SK-N-SH (cell line): ENCODE measurements at regions of chr9 and their contacts with region 1.

Region 1: GRCh38 chr9:114155263-114155972 is at the start of gene COL27A1:
- DNase-seq: peak; percentile 97
- H3K4me3 ChIP-seq: peak within 1 kb of the TSS; percentile 54 to 88
- H3K27ac ChIP-seq: peak within 1 kb of the TSS in 1 of 2 experiments; percentile 29; a peak in 1 of 4 replicates
- H3K4me1 ChIP-seq: peaks cover 5 to 8% of the 10 kb centered on the region in 2 experiments; a peak in 2 of 4 replicates
- H3K27me3 ChIP-seq: peaks cover 5% of the 10 kb centered on the region; the same call in 1 of the 2 replicates
- CTCF ChIP-seq: peak; percentile 93
- EP300 ChIP-seq: no peak
- RAD21 ChIP-seq: peak; percentile 82
- polyA plus RNA-seq, gene COL27A1: 6.8 and 8.7 TPM in 2 replicates

Region 2: DNA sequence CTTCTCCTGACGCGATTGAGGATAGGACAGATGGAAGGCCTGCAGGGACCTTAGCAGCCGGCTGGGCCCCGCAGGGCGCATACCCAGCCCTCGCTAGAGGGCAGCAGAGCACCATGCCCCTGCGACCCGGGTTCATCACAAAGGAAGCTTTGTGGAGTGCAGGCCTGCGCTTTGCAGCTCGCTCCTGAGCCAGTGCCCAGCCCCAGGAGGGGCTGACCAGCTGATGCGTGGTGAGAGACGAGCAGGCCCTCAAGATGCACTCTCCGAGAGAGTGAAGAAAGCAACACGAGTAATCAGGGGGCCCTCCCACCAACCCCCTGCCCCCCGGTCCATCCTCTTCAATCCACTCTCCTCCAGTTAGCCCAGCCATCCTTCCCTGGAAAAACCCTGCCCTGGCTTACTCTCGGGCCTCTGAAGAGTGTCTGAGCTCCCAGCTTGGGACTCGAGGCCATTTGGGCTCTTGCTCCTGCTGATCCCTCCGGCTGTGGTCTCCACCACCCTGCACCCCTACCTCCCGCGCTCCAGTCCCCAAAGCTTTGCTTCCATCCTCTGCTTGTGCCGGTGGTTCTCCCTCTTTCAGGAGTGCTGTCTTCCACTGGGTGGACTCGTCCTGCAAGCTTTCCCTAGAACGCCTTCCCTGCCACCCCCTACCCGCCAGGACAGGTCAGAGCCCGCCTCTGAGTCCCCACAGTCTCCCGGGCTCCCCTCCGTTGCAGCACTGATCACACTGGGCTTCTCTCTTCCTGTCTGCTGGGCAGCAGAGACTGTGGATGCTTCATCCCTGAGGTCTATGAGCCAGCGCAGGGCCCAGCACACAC is 47.2 kb before region 1 on chr9:
- CTCF ChIA-PET with region 1: interaction called, 30 read pairs
- POLR2A ChIA-PET with region 1: no interaction called
- DNase-seq: peak; percentile 88
- H3K4me3 ChIP-seq: no peak overlapping the region; a peak in 1 of 4 replicates
- H3K27ac ChIP-seq: no peak overlapping the region
- H3K4me1 ChIP-seq: no peaks in the 10 kb centered on the region; a peak in 1 of 4 replicates
- H3K27me3 ChIP-seq: no peaks in the 10 kb centered on the region; the same call in 1 of the 2 replicates
- CTCF ChIP-seq: peak; percentile 82
- EP300 ChIP-seq: no peak
- RAD21 ChIP-seq: peak; percentile 92

Region 3: GRCh38 chr9:114174876-114175771 is 19.7 kb after region 1 on chr9:
- CTCF ChIA-PET with region 1: interaction called, 15 read pairs
- POLR2A ChIA-PET with region 1: no interaction called
- DNase-seq: peak; percentile 58
- H3K4me3 ChIP-seq: no peak overlapping the region
- H3K27ac ChIP-seq: peak overlapping the region; percentile 19 to 79; a peak in 3 of 4 replicates
- H3K4me1 ChIP-seq: peaks cover 41 to 43% of the 10 kb centered on the region in 2 experiments; a peak in 3 of 4 replicates
- H3K27me3 ChIP-seq: no peaks in the 10 kb centered on the region
- CTCF ChIP-seq: no peak
- EP300 ChIP-seq: no peak
- RAD21 ChIP-seq: no peak

Region 4: GRCh38 chr9:114205171-114206015 is 50.0 kb after region 1 on chr9:
- CTCF ChIA-PET with region 1: interaction called, 10 read pairs
- POLR2A ChIA-PET with region 1: no interaction called
- DNase-seq: no peak
- H3K4me3 ChIP-seq: no peak overlapping the region
- H3K27ac ChIP-seq: no peak overlapping the region
- H3K4me1 ChIP-seq: peaks cover 0 to 4% of the 10 kb centered on the region in 2 experiments; a peak in 2 of 4 replicates
- H3K27me3 ChIP-seq: no peaks in the 10 kb centered on the region
- CTCF ChIP-seq: no peak
- EP300 ChIP-seq: no peak
- RAD21 ChIP-seq: no peak

Region 5: DNA sequence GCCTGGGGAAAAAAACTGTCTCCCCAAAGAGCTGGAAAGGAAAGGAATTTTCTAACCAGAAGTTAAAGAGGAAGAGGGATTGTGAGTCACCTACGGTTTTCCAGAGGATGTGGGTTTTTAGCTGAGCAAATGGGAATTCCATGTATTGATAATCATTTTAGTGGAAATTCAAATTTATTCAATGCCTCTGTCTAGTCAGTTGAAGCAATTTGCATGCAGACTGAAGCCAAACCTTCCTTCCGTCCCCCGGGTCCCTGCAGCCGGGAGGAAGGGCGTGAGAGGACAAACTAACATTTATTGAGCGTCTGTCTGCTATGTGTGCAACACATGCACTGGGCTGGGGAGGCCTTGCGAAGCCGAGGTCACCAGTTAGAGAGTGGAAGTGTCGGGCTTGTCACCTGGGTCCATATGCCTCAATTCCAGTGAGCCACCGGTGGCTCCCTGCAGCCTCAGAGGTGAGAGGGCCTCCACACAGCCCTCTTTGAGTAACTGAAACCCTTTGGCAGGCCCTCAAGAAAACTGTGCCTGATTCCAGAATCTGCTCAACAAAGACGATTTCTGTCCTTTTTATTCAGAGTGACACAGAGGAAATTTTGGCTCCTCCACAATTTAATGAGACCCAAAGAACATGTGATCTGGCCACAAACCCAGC is 70.3 kb after region 1 on chr9:
- CTCF ChIA-PET with region 1: interaction called, 19 read pairs
- POLR2A ChIA-PET with region 1: no interaction called
- DNase-seq: no peak
- H3K4me3 ChIP-seq: no peak overlapping the region
- H3K27ac ChIP-seq: peak overlapping the region; percentile 14 to 89; a peak in 3 of 4 replicates
- H3K4me1 ChIP-seq: peaks cover 23 to 25% of the 10 kb centered on the region in 2 experiments; a peak in 3 of 4 replicates
- H3K27me3 ChIP-seq: no peaks in the 10 kb centered on the region
- CTCF ChIP-seq: no peak
- EP300 ChIP-seq: no peak
- RAD21 ChIP-seq: no peak

Region 6: GRCh38 chr9:114238891-114239875 is 83.8 kb after region 1 on chr9:
- CTCF ChIA-PET with region 1: interaction called, 39 read pairs
- POLR2A ChIA-PET with region 1: no interaction called
- DNase-seq: peak; percentile 94
- H3K4me3 ChIP-seq: no peak overlapping the region
- H3K27ac ChIP-seq: no peak overlapping the region; a peak in 1 of 4 replicates
- H3K4me1 ChIP-seq: peaks cover 0 to 42% of the 10 kb centered on the region in 2 experiments; a peak in 2 of 4 replicates
- H3K27me3 ChIP-seq: no peaks in the 10 kb centered on the region
- CTCF ChIP-seq: peak; percentile 46
- EP300 ChIP-seq: 0 out of 4 replicates have a peak, but pooled peaks of 1 of the 2 experiments have one; percentile 21
- RAD21 ChIP-seq: peak; percentile 87